Heart right ventricle (tissue), 16 donors: ENCODE measurements at regions of chr4 and their contacts with region 1.

Region 1: GRCh38 chr4:99117876-99118693 is 26.0 kb downstream of the ADH4 start:
- DNase-seq: no peak
- ATAC-seq: no peak
- H3K4me3 ChIP-seq: no peak overlapping the region
- H3K27ac ChIP-seq: no peak overlapping the region
- H3K4me1 ChIP-seq: no peaks in the 10 kb centered on the region
- H3K27me3 ChIP-seq: no peaks in the 10 kb centered on the region
- CTCF ChIP-seq: peak; percentile 14 to 65 (median 47)

Region 2: GRCh38 chr4:99100876-99101275 is 17.2 kb before region 1 on chr4:
- intact Hi-C with region 1: no loop called
- DNase-seq: no peak
- ATAC-seq: no peak
- H3K4me3 ChIP-seq: no peak overlapping the region
- H3K27ac ChIP-seq: no peak overlapping the region
- H3K4me1 ChIP-seq: peaks cover 0 to 14% (median 0%) of the 10 kb centered on the region in 9 donors
- H3K27me3 ChIP-seq: no peaks in the 10 kb centered on the region
- CTCF ChIP-seq: no peak

Region 3: DNA sequence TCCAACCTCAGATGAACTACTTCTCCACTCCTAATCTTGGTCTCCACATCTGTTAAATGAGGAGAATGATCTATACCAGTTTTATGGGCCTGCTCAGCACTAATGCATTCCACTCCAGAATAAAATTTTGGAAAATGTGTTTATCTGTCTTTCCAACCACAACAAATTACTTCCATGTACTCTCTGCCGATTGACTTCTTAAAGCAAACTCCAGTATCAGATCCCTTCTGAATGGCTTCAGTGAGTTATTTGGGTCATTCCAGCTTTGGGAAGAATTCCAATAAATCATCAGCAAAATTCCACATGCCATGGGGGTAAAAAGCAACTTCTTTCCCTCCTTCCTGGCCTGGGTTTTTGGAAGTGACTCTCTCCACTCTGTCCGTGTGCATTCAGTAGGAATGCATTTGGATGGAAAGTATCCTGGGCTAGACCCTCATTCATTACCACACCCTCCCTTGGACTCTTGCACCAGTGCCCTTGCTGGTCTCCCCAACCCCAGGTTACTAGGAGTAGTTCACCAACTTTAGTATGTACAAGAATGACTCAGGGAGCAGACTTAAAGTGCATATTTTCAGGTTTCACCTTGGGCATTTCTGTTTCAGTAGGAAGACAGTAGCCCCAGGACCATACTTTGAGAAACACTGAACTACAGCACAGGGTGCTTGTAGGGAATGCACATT is 116.4 kb after region 1 on chr4:
- intact Hi-C with region 1: no loop called
- DNase-seq: no peak
- ATAC-seq: no peak
- H3K4me3 ChIP-seq: no peak overlapping the region
- H3K27ac ChIP-seq: no peak overlapping the region
- H3K4me1 ChIP-seq: no peaks in the 10 kb centered on the region
- H3K27me3 ChIP-seq: no peaks in the 10 kb centered on the region
- CTCF ChIP-seq: no peak

Region 4: DNA sequence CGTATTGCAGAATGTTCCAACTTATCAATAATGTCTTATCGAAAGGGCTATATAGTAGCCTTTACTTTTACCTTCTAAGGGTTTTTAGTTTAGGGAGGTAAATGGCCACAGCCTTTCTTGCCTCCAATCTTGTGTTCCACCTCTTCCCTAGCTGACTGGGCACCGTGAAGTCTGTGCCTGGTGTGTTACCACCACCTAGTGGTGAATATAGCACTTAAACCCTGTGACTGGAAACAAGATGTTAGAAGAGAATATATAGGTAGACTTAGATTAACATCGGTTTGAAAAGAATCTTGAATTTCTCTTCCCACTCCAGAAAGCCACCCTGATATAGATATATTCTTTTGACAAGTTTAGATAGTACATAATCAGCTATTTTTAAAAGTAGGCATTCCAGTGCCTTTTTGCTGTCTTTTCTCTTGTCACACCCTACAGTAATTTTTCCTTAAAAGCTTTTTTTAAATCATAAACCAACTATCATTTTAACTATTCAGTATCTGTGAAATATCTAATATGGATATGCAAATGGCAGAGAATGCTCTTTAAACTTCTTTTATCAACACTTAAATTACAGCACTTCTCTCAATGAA is 344.9 kb after region 1 on chr4:
- intact Hi-C with region 1: loop called in 7 of 10 experiments (anchors 1 to 10 kb)
- DNase-seq: peak in 1 of 2 donors; percentile 34
- ATAC-seq: peak in 7 of 8 donors; percentile 69 to 90 (median 75)
- H3K4me3 ChIP-seq: no peak overlapping the region
- H3K27ac ChIP-seq: no peak overlapping the region
- H3K4me1 ChIP-seq: no peaks in the 10 kb centered on the region
- H3K27me3 ChIP-seq: peaks cover 0 to 19% (median 0%) of the 10 kb centered on the region in 7 donors
- CTCF ChIP-seq: peak; percentile 53 to 85 (median 77)

Region 5: DNA sequence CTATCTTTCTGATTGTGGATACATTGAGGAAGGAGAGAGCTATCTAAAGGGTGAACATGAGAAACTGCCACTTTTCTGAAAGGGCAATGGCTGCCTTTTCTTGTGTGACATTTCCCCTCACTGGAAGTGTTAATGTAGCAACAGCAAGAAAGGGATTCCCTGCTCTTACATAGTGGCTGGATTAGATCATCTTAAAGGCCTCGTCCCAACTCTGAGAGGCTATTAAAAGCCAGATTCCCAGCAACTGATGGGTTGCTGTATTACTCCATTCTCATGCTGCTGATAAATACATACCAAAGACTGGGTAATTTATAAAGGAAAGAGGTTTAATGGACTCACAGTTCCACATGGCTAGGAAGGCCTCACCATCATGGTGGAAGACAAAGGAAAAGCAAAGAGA is 350.8 kb after region 1 on chr4:
- intact Hi-C with region 1: loop called in 5 of 10 experiments (anchors 5 to 10 kb)
- DNase-seq: no peak
- ATAC-seq: no peak
- H3K4me3 ChIP-seq: no peak overlapping the region
- H3K27ac ChIP-seq: no peak overlapping the region
- H3K4me1 ChIP-seq: no peaks in the 10 kb centered on the region
- H3K27me3 ChIP-seq: peaks cover 0 to 11% (median 0%) of the 10 kb centered on the region in 7 donors
- CTCF ChIP-seq: no peak